ENCODE measurements at regions of chr14 and their contacts with region 1.

Region 1: DNA sequence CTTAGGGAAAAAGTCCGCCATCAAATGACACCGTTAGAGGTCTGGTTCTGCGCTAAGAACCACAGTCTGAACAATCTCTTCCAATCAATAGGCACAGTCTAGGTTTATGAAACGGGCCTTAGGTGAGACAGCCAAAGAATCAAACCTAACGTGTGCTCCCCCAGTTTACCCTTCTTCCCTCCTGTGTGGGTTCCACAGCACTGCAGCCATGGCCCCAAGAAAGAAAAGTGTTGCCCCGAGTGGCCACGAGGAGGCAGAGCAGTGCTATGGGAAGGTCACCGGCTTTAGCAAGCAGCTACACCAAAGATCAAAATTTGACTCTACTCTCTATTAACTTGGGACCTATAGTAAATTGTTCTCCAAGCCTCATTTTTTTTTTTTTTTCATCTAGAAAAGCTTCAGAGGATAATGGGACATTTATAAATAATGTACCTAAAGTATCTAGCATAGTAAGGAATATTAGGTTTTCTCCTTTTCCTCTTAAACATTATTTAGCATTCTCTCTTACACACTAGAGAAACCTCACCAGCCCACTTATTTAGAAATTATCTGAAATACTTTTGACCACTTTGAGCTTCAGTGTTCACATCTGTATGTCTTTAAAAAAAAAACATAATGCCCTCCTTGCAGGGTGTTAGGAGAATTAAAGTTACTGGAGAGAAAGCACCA is 70.2 kb upstream of the GPHB5 start:
- DNase-seq: peak; percentile 46 to 51
- ATAC-seq: peak in 7 of 8 donors; percentile 73 to 89 (median 86)
- H3K4me3 ChIP-seq: no peak overlapping the region
- H3K27ac ChIP-seq: no peak overlapping the region
- H3K4me1 ChIP-seq: no peaks in the 10 kb centered on the region
- H3K27me3 ChIP-seq: no peaks in the 10 kb centered on the region
- CTCF ChIP-seq: peak; percentile 58 to 87 (median 81)

Region 2: GRCh38 chr14:63249092-63249491 is 139.8 kb before region 1 on chr14:
- intact Hi-C with region 1: no loop called
- DNase-seq: peak in 1 of 2 donors; percentile 16
- ATAC-seq: peak; percentile 42 to 90 (median 77)
- H3K4me3 ChIP-seq: no peak overlapping the region
- H3K27ac ChIP-seq: peak overlapping the region in 4 of 10 donors; percentile 7 to 46 (median 32)
- H3K4me1 ChIP-seq: peaks cover 0 to 47% (median 13%) of the 10 kb centered on the region in 9 donors
- H3K27me3 ChIP-seq: no peaks in the 10 kb centered on the region
- CTCF ChIP-seq: no peak

Region 3: GRCh38 chr14:63457498-63457897 is 68.6 kb after region 1 on chr14:
- intact Hi-C with region 1: no loop called
- DNase-seq: no peak
- ATAC-seq: no peak
- H3K4me3 ChIP-seq: no peak overlapping the region
- H3K27ac ChIP-seq: no peak overlapping the region
- H3K4me1 ChIP-seq: peaks cover 0 to 44% (median 23%) of the 10 kb centered on the region in 9 donors
- H3K27me3 ChIP-seq: no peaks in the 10 kb centered on the region
- CTCF ChIP-seq: no peak

Region 4: GRCh38 chr14:63632932-63633514 is 244.1 kb after region 1 on chr14:
- intact Hi-C with region 1: loop called in 3 of 10 experiments (anchors 10 kb)
- DNase-seq: no peak
- ATAC-seq: no peak
- H3K4me3 ChIP-seq: no peak overlapping the region
- H3K27ac ChIP-seq: no peak overlapping the region
- H3K4me1 ChIP-seq: no peaks in the 10 kb centered on the region
- H3K27me3 ChIP-seq: no peaks in the 10 kb centered on the region
- CTCF ChIP-seq: peak in 7 of 9 donors; percentile 30 to 57 (median 45)

Region 5: GRCh38 chr14:63641473-63642228 is 252.8 kb after region 1 on chr14 and contains the start of gene WDR89:
- intact Hi-C with region 1: loop called in 6 of 10 experiments (anchors 5 to 10 kb)
- DNase-seq: peak; percentile 93 to 97
- ATAC-seq: peak; percentile 97 to 99 (median 98)
- H3K4me3 ChIP-seq: peak within 1 kb of the TSS; percentile 51 to 80 (median 68)
- H3K27ac ChIP-seq: peak within 1 kb of the TSS; percentile 62 to 96 (median 90)
- H3K4me1 ChIP-seq: peaks cover 0 to 25% (median 12%) of the 10 kb centered on the region in 9 donors
- H3K27me3 ChIP-seq: no peaks in the 10 kb centered on the region
- CTCF ChIP-seq: peak; percentile 49 to 76 (median 72)
- total RNA-seq, gene WDR89: 5.5 to 6.9 (median 6.1) TPM

Region 6: DNA sequence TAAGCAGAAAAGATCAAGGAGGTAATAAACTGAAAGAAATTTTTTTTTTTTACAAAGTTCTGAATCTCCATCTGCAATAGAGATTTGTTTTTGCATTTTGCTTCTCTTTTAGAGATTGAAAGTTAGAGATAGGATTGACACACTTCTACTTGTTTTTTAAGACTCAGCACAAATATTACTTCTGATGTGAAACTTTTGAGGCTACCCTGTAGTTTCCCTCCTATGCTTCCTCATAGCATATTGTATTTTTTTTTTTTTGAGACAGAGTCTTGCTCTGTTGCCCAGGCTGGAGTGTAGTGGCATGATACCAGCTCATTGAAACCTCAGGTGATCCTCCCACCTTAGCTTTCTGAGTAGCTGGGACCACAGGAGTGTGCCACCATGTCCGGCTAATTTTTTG is 371.1 kb after region 1 on chr14:
- intact Hi-C with region 1: loop called in 5 of 10 experiments (anchors 5 to 10 kb)
- DNase-seq: no peak
- ATAC-seq: peak in 2 of 8 donors; percentile 29 to 44
- H3K4me3 ChIP-seq: peak overlapping the region in 1 of 10 donors; percentile 31
- H3K27ac ChIP-seq: peak overlapping the region in 4 of 10 donors; percentile 16 to 84 (median 36)
- H3K4me1 ChIP-seq: peaks cover 0 to 21% (median 0%) of the 10 kb centered on the region in 9 donors
- H3K27me3 ChIP-seq: no peaks in the 10 kb centered on the region
- CTCF ChIP-seq: no peak